AG04449 (cell line): ENCODE measurements at regions of chr18 and their contacts with region 1.

Region 1: GRCh38 chr18:45626330-45627203 is 11.3 kb downstream of the SLC14A2 start:
- DNase-seq: no peak
- H3K4me3 ChIP-seq: no peak overlapping the region
- CTCF ChIP-seq: no peak

Region 2: DNA sequence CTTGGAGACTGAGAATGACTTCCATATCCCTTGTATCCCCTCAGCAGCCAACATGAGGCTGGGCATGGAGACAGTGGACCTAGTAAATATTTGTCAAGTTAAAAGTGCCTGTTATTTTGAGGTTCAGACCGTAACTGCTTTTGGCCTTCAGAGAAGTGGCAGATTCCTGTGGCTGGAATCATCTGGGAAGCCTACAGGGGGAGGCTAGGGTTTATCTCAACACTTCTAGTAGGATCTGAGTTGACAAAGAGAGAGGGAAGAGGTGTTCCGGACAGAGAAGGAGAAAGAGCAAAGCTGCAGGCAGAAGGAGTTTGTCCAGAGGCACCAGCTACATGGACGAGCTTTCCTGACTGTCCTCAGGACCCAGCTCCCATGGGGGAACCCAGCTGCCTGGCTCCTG is 15.7 kb after region 1 on chr18:
- CTCF ChIA-PET with region 1: interaction called, 12 read pairs
- POLR2A ChIA-PET with region 1: no interaction called
- DNase-seq: no peak
- H3K4me3 ChIP-seq: no peak overlapping the region
- CTCF ChIP-seq: no peak

Region 3: GRCh38 chr18:45793306-45793965 is 166.9 kb after region 1 on chr18:
- CTCF ChIA-PET with region 1: no interaction called
- POLR2A ChIA-PET with region 1: no interaction called
- DNase-seq: peak; percentile 73
- H3K4me3 ChIP-seq: no peak overlapping the region
- CTCF ChIP-seq: no peak

Region 4: GRCh38 chr18:45967007-45967706 is 340.6 kb after region 1 on chr18 and contains the start of gene EPG5:
- CTCF ChIA-PET with region 1: no interaction called
- POLR2A ChIA-PET with region 1: no interaction called
- DNase-seq: peak; percentile 72
- H3K4me3 ChIP-seq: peak within 1 kb of the TSS; percentile 97
- CTCF ChIP-seq: no peak